CD4-positive, alpha-beta T cell (primary cell): ENCODE measurements at regions of chr11 and their contacts with region 1.

Region 1: DNA sequence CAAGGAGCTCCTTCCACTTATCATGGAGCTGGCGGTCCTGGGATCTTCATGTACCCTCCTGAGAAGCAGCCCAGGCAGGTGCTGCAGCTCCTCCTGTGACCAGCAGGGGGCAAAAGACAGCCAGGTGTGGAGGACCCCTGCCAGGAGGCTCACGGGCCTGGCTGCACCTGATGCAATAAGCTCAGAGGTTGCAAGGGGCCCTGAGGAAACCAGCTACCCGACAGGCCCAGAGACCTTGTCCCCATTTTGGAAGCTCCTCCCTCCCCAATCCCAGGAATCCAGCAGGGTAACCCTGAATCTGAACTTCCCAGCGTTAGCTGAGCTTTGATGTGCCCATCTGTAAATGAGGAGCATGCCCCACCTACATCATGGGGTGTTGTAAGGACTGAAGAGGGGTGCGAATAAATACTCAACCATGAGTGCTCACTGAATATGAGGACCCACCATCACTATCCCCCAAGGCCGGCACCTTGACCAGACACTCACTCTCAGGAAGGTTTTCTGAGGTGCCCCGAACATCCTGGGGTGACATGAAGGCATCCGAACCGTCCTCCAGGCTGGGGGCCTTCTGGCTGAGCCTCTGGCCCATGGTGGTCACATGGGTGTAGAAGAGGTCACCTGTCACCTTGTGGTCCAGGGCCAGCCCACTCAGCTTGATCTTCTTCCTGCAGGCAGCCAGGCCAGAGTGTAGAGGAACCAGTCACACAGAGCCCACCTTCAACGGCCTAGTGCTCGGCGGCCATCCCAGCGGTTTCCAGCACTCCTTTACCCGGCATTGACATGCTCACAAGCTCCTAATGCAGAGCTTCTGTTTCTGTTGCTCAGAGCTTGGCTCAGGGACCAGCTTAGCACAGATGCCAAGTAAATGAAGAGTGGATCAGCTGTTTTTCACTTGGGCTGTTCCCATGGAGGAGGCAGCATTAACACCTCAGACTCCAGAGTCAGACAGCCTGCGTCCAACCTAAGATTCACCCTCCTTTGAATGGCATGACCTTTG is 21.7 kb downstream of the SLC43A1 start:
- DNase-seq: peak; percentile 63 to 84 (median 69)
- ATAC-seq: peak; percentile 94
- H3K4me3 ChIP-seq: no peak overlapping the region
- H3K4me3 Mint-ChIP-seq: no peak overlapping the region
- H3K27ac ChIP-seq: no peak overlapping the region
- H3K27ac Mint-ChIP-seq: no peak overlapping the region
- H3K4me1 ChIP-seq: peaks cover 4% of the 10 kb centered on the region
- H3K4me1 Mint-ChIP-seq: no peaks in the 10 kb centered on the region
- H3K27me3 ChIP-seq: no peaks in the 10 kb centered on the region
- H3K27me3 Mint-ChIP-seq: no peaks in the 10 kb centered on the region
- CTCF ChIP-seq: peak; percentile 97

Region 2: GRCh38 chr11:57480409-57481137 is 13.2 kb before region 1 on chr11:
- CTCF ChIA-PET with region 1: interaction called, 10 read pairs
- POLR2A ChIA-PET with region 1: no interaction called
- intact Hi-C with region 1: no loop called
- DNase-seq: peak; percentile 45 to 74 (median 58)
- ATAC-seq: peak; percentile 55
- H3K4me3 ChIP-seq: no peak overlapping the region
- H3K4me3 Mint-ChIP-seq: no peak overlapping the region
- H3K27ac ChIP-seq: no peak overlapping the region
- H3K27ac Mint-ChIP-seq: no peak overlapping the region
- H3K4me1 ChIP-seq: peaks cover 27% of the 10 kb centered on the region
- H3K4me1 Mint-ChIP-seq: peaks cover 18% of the 10 kb centered on the region
- H3K27me3 ChIP-seq: peaks cover 20% of the 10 kb centered on the region in 2 experiments
- H3K27me3 Mint-ChIP-seq: peaks cover 16% of the 10 kb centered on the region
- CTCF ChIP-seq: peak; percentile 56

Region 3: GRCh38 chr11:57638005-57638781 is 144.4 kb after region 1 on chr11:
- CTCF ChIA-PET with region 1: interaction called, 11 read pairs
- POLR2A ChIA-PET with region 1: no interaction called
- intact Hi-C with region 1: loop called (anchors 2 kb)
- DNase-seq: peak in 1 of 14 experiments; percentile 18
- ATAC-seq: peak; percentile 40
- H3K4me3 ChIP-seq: peak overlapping the region; percentile 59
- H3K4me3 Mint-ChIP-seq: peak overlapping the region; percentile 92
- H3K27ac ChIP-seq: no peak overlapping the region
- H3K27ac Mint-ChIP-seq: no peak overlapping the region
- H3K4me1 ChIP-seq: peaks cover 24% of the 10 kb centered on the region
- H3K4me1 Mint-ChIP-seq: peaks cover 21% of the 10 kb centered on the region
- H3K27me3 ChIP-seq: peaks cover 14 to 19% of the 10 kb centered on the region in 2 experiments
- H3K27me3 Mint-ChIP-seq: peaks cover 47% of the 10 kb centered on the region
- CTCF ChIP-seq: no peak

Region 4: GRCh38 chr11:57644748-57645688 is 151.2 kb after region 1 on chr11:
- CTCF ChIA-PET with region 1: interaction called, 19 read pairs
- POLR2A ChIA-PET with region 1: no interaction called
- intact Hi-C with region 1: loop called (anchors 2 kb)
- DNase-seq: peak; percentile 73 to 90 (median 86)
- ATAC-seq: peak; percentile 68
- H3K4me3 ChIP-seq: no peak overlapping the region
- H3K4me3 Mint-ChIP-seq: no peak overlapping the region
- H3K27ac ChIP-seq: no peak overlapping the region
- H3K27ac Mint-ChIP-seq: no peak overlapping the region
- H3K4me1 ChIP-seq: peaks cover 42% of the 10 kb centered on the region
- H3K4me1 Mint-ChIP-seq: peaks cover 50% of the 10 kb centered on the region
- H3K27me3 ChIP-seq: peaks cover 48 to 50% of the 10 kb centered on the region in 2 experiments
- H3K27me3 Mint-ChIP-seq: peaks cover 64% of the 10 kb centered on the region
- CTCF ChIP-seq: peak; percentile 71